ENCODE measurements at regions of chr1 and their contacts with region 1.

Region 1: DNA sequence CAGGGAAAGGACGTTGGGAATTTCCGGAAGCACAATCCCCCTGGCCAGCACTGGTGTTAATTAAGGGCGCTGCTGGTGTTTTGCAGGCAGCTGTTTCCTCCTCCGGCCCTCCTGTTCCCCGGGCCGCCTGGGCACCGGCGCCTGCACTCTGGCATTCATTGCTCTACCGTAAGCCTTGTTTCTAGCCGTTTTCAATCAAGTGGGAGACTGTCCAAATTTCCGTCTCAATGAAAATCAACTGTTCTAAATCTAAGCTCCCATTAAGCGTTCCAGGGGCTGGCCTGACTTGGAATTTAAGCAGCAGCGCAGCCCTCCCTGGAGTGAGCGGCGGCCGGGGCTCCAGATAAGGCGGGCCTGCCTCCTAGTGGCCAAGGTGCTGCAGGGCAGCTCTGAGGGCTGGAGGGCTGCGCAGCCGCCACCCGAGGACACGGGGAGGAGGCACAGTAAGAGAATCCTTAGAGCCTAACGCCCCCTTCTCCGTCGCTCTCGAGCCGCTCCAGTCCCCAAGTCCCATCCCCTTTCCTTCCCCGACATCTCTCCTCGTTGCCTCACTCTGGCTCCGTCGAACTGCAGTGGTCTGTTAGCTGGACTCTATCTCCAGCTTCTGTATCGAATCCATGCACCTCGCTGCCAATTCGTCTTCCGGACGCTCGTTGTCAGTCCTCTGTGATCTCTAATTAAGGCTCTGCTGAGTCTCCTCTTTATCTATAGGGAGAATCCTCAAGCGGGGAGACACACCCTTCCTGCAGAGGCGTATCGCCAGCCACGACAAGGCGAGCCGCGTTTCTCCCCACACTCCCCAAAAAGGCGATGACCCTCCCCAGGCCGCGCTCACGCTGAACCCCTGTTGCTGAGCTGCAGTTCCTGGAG is 57.8 kb upstream of the LRRC8D start:
- DNase-seq: peak; percentile 90 to 95 (median 93)
- H3K4me3 ChIP-seq: peak overlapping the region; percentile 71 to 77 (median 74)
- H3K27ac ChIP-seq: peak overlapping the region; percentile 26 to 30
- H3K4me1 ChIP-seq: peaks cover 0 to 8% (median 0%) of the 10 kb centered on the region in 3 donors
- H3K27me3 ChIP-seq: no peaks in the 10 kb centered on the region
- CTCF ChIP-seq: peak; percentile 97

Region 2: GRCh38 chr1:89530444-89531089 is 232.4 kb before region 1 on chr1:
- intact Hi-C with region 1: no loop called
- DNase-seq: no peak
- H3K4me3 ChIP-seq: no peak overlapping the region
- H3K27ac ChIP-seq: no peak overlapping the region
- H3K4me1 ChIP-seq: peaks cover 0 to 4% (median 0%) of the 10 kb centered on the region in 3 donors
- H3K27me3 ChIP-seq: no peaks in the 10 kb centered on the region
- CTCF ChIP-seq: no peak

Region 3: GRCh38 chr1:89632657-89633247 is 130.3 kb before region 1 on chr1 and contains the start of gene LRRC8C:
- intact Hi-C with region 1: loop called (anchors 5 kb)
- DNase-seq: peak; percentile 89 to 94 (median 92)
- H3K4me3 ChIP-seq: peak within 1 kb of the TSS; percentile 63 to 85 (median 74)
- H3K27ac ChIP-seq: peak within 1 kb of the TSS; percentile 85 to 89
- H3K4me1 ChIP-seq: peaks cover 0 to 8% (median 0%) of the 10 kb centered on the region in 3 donors
- H3K27me3 ChIP-seq: no peaks in the 10 kb centered on the region
- CTCF ChIP-seq: peak; percentile 49
- total RNA-seq, gene LRRC8C: 12.7 TPM

Region 4: GRCh38 chr1:89657886-89658285 is 105.1 kb before region 1 on chr1:
- intact Hi-C with region 1: no loop called
- DNase-seq: no peak
- H3K4me3 ChIP-seq: no peak overlapping the region
- H3K27ac ChIP-seq: no peak overlapping the region
- H3K4me1 ChIP-seq: no peaks in the 10 kb centered on the region
- H3K27me3 ChIP-seq: no peaks in the 10 kb centered on the region
- CTCF ChIP-seq: no peak

Measured in kidney (tissue), 22 donors.